ENCODE measurements at regions of chr15 and their contacts with region 1.

Region 1: DNA sequence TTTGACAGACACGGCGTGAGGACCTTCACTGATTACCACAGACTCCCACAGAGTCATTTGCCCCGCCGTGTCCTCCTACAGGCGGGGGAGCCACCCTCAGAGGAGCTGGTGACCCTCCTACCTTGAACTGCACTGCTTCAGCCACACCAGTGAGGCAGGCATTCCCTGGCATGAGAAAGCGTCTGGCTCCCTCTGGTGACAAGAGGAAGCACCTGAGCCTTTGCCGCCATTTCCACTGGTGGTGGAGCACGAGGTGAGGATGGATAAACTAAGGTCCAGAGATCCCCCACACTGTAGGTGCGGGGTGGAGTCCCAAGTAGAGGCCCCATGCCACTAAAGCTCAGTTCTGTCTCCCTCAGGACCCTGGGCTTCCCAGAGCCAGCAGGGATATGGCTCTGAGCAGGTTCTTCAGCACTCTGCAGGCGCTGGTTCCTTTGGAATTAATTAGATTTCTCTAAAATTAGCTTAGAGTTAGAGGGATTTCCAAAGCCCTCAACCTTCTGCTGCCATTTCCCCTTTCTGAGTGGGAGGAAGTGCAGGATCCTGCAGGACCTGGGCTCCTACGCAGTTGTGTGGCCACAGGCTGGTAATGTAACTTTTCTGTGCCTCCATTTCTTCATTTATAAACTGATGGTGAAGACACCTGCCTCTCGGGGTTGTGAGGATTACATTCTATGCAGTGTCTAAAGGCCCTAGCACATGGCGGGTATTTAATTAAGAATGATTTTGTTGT is 224.0 kb downstream of the SLCO3A1 start:
- DNase-seq: peak; percentile 87

Region 2: GRCh38 chr15:91294795-91295194 is 782.7 kb before region 1 on chr15:
- intact Hi-C with region 1: loop called in 1 of 2 experiments (anchors 5 kb)
- DNase-seq: no peak

Region 3: GRCh38 chr15:91302588-91303439 is 774.7 kb before region 1 on chr15:
- intact Hi-C with region 1: loop called (anchors 5 kb)
- DNase-seq: no peak

Region 4: GRCh38 chr15:91706322-91707032 is 371.0 kb before region 1 on chr15:
- intact Hi-C with region 1: loop called (anchors 5 to 10 kb)
- DNase-seq: peak; percentile 90

Region 5: GRCh38 chr15:91852741-91853510 is 224.6 kb before region 1 on chr15:
- intact Hi-C with region 1: loop called (anchors 5 to 10 kb)
- DNase-seq: peak; percentile 96

Region 6: GRCh38 chr15:91942676-91943576 is 134.6 kb before region 1 on chr15:
- intact Hi-C with region 1: loop called in 1 of 2 experiments (anchors 10 kb)
- DNase-seq: peak; percentile 92

Region 7: DNA sequence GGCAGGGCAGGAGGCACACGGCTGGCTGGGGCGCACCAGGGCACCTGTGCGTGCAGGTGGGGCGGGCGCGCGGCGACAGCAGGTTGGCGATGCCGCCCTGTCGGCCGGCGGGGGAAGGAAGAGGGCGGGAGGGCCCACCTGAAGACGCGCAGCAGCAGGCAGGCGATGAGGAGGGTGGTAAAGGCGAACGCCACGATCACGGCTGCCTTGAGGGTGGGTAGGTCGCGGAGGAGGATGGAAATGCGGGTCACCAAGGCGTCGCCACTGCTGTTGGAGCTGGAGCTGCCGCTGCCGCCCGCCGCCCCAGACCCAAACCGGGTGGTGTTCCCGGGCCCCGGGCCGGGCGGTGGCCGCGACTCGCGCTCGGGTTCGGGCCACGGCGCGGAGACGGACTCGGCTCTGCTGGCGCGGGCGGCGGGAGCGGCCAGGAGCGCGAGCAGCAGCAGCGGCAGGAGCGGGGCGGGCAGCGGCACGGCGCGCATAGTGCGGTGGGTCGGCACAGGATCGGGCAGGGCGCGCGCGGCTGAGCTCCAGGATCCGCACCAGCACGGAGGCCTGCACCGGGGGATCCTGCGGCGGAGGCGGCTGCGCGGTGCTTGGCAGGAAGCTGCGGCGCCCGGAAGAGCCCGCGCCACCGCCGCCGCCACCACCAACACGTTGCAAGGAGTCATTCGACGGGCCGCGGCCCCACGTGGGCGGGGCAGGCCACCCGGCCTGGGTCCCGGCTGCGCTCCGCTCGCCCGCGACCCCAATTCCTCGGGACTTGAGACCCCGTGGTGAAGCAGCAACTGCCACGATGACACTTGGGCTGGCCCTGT is 577.9 kb after region 1 on chr15 and contains the start of gene FAM174B:
- intact Hi-C with region 1: loop called in 1 of 2 experiments (anchors 5 kb)
- DNase-seq: peak; percentile 83
- total RNA-seq, gene FAM174B: 8.0 to 9.0 TPM